Activated CD8-positive, alpha-beta memory T cell treated with anti-CD3 and anti-CD28 coated beads, Interleukin-2, amount 10 ng/mL, durations not matched to agents 7 days and 5 days (primary cell): ENCODE measurements at regions of chr18 and their contacts with region 1.

Region 1: GRCh38 chr18:50356036-50356945 is 18.6 kb upstream of the SKA1 start:
- DNase-seq: peak; percentile 48
- ATAC-seq: peak; percentile 60
- H3K4me3 Mint-ChIP-seq: no peak overlapping the region
- H3K27ac Mint-ChIP-seq: peak overlapping the region; percentile 26
- H3K4me1 Mint-ChIP-seq: peaks cover 20% of the 10 kb centered on the region
- H3K27me3 Mint-ChIP-seq: peaks cover 37% of the 10 kb centered on the region

Region 2: DNA sequence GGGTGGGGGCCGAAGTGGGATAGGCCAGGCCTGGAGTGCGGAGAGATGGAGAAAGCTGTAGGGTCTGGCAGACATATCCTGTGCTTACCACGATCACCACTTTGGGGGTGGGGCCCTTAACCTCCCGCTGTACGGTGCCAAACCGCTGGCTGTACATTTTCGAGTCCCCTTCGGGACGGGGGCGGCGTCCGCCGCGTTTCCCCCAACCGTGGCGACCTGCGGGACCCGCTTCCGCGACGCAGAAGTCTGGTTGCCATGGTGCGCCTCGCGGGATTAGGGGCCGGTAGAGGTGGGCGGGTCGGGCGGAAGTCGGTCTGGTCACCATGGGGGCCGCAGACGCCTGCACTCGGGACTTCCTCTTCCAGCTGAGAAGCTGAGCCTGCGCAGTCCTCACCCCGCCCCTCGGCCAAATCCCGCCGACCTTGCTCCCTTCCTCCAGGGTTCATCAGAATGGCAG is 90.0 kb before region 1 on chr18 and contains the start of gene CFAP53:
- CTCF ChIA-PET with region 1: interaction called, 29 read pairs
- DNase-seq: peak; percentile 95
- ATAC-seq: peak; percentile 90
- H3K4me3 Mint-ChIP-seq: peak within 1 kb of the TSS; percentile 73
- H3K27ac Mint-ChIP-seq: peak within 1 kb of the TSS; percentile 60
- H3K4me1 Mint-ChIP-seq: peaks cover 29% of the 10 kb centered on the region
- H3K27me3 Mint-ChIP-seq: peaks cover 9% of the 10 kb centered on the region
- total RNA-seq, gene CFAP53: 0.16 to 0.50 TPM

Region 3: DNA sequence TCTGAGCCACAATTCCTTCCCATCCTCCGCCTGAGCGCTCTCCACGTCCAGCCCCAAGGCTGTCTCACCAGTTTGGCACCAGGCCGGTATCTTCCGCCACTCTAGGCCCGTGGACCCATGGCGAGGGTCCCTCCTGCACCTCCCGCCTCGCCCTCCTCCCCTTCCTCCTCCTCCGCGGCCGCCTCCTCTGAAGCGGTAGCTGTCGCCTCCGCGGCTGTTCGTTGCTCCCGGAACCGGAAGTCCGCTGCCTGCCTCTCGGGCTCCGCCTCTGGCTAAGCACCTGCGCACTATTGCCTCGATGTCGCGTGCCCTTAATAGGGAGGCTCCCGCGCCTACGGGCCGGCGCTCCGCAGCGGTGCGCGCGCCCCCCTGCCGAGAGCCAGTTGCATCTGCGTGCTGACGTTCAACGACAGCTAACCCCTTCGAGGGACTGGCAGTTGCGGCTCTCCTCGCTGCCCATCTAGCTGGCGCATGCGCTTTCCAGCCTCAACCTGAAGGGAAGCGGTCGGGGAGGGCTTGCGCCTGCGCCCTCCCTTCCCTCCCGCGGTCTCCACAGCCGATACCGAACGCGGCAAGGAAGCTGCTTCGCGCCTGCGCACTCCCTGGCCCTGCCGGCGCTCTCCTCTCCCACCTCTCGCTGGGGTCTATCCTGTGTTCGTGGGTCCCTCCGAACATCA is 74.9 kb before region 1 on chr18 and contains the start of gene MBD1:
- CTCF ChIA-PET with region 1: interaction called, 22 read pairs
- DNase-seq: peak; percentile 98
- ATAC-seq: peak; percentile 92
- H3K4me3 Mint-ChIP-seq: peak within 1 kb of the TSS; percentile 99
- H3K27ac Mint-ChIP-seq: peak within 1 kb of the TSS; percentile 95
- H3K4me1 Mint-ChIP-seq: peaks cover 54% of the 10 kb centered on the region
- H3K27me3 Mint-ChIP-seq: no peaks in the 10 kb centered on the region
- total RNA-seq, gene MBD1: 97.8 to 106 TPM

Region 4: GRCh38 chr18:50374753-50375391 is 18.6 kb after region 1 on chr18 and contains the start of gene SKA1:
- CTCF ChIA-PET with region 1: interaction called, 17 read pairs
- DNase-seq: peak; percentile 96
- ATAC-seq: peak; percentile 98
- H3K4me3 Mint-ChIP-seq: peak within 1 kb of the TSS; percentile 96
- H3K27ac Mint-ChIP-seq: peak within 1 kb of the TSS; percentile 94
- H3K4me1 Mint-ChIP-seq: peaks cover 26% of the 10 kb centered on the region
- H3K27me3 Mint-ChIP-seq: peaks cover 5% of the 10 kb centered on the region
- total RNA-seq, gene SKA1: 45.6 to 47.5 TPM

Region 5: GRCh38 chr18:50441518-50441917 is 85.2 kb after region 1 on chr18:
- CTCF ChIA-PET with region 1: no interaction called
- DNase-seq: no peak
- ATAC-seq: no peak
- H3K4me3 Mint-ChIP-seq: no peak overlapping the region
- H3K27ac Mint-ChIP-seq: no peak overlapping the region
- H3K4me1 Mint-ChIP-seq: no peaks in the 10 kb centered on the region
- H3K27me3 Mint-ChIP-seq: no peaks in the 10 kb centered on the region